ENCODE measurements at regions of chr10 and their contacts with region 1.

Region 1: DNA sequence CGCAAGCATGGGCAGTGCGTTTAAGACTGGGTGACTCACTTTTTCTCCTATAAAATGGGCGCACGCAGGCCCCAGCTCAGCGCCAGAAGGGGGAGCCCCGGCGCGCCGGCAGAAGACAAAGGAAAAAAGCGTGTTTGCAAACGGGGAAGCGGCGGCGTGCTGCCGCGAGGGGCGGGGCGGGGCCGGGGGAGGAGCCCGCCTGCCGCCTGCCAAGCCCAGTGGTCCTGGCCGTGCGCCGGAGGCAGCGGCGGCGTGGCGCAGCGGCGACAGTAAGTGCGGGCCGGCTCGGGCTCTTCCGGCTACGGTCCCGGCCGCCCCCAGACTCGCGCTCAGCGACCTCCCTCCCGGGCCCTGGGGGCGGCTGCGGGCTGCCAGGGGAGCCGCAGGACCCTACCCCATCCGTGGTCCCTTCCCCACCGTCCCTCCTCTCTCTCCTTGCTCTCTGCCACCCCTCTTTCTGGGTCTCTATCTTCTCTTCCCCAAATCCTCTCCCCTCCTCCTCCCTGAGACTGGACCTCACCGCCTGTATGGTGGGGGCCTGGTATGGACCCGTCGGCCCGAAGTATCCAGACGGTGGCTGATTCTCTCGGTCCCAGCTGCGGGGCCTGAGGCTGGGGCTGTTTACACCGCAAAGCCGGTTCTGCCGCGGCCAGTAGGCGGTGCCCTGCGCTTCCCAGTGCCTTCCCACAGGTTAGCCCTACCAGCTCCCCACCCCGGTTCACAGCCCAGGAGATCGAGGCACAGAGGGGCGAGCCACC is at the start of gene SLC29A3:
- DNase-seq: peak; percentile 93
- H3K4me3 Mint-ChIP-seq: peak within 1 kb of the TSS; percentile 90
- H3K27ac Mint-ChIP-seq: peak within 1 kb of the TSS; percentile 46
- H3K4me1 Mint-ChIP-seq: peaks cover 23% of the 10 kb centered on the region
- H3K27me3 Mint-ChIP-seq: no peaks in the 10 kb centered on the region
- total RNA-seq, gene SLC29A3: 2.5 to 3.0 TPM

Region 2: GRCh38 chr10:71367271-71367670 is 48.0 kb after region 1 on chr10:
- CTCF ChIA-PET with region 1: no interaction called
- POLR2A ChIA-PET with region 1: no interaction called
- intact Hi-C with region 1: loop called (anchors 1 kb)
- DNase-seq: no peak
- H3K4me3 Mint-ChIP-seq: no peak overlapping the region
- H3K27ac Mint-ChIP-seq: no peak overlapping the region
- H3K4me1 Mint-ChIP-seq: peaks cover 3% of the 10 kb centered on the region
- H3K27me3 Mint-ChIP-seq: peaks cover 3% of the 10 kb centered on the region

Region 3: GRCh38 chr10:71372882-71373495 is 53.8 kb after region 1 on chr10:
- CTCF ChIA-PET with region 1: interaction called, 21 read pairs
- POLR2A ChIA-PET with region 1: interaction called, 5 read pairs
- intact Hi-C with region 1: loop called (anchors 1 kb)
- DNase-seq: no peak
- H3K4me3 Mint-ChIP-seq: no peak overlapping the region
- H3K27ac Mint-ChIP-seq: no peak overlapping the region
- H3K4me1 Mint-ChIP-seq: peaks cover 7% of the 10 kb centered on the region
- H3K27me3 Mint-ChIP-seq: peaks cover 3% of the 10 kb centered on the region

Region 4: GRCh38 chr10:71378336-71379117 is 59.3 kb after region 1 on chr10:
- CTCF ChIA-PET with region 1: interaction called, 21 read pairs
- POLR2A ChIA-PET with region 1: interaction called, 5 read pairs
- intact Hi-C with region 1: loop called (anchors 1 kb)
- DNase-seq: no peak
- H3K4me3 Mint-ChIP-seq: no peak overlapping the region
- H3K27ac Mint-ChIP-seq: no peak overlapping the region
- H3K4me1 Mint-ChIP-seq: peaks cover 7% of the 10 kb centered on the region
- H3K27me3 Mint-ChIP-seq: no peaks in the 10 kb centered on the region

Region 5: GRCh38 chr10:71608819-71609768 is 289.9 kb after region 1 on chr10:
- CTCF ChIA-PET with region 1: interaction called, 11 read pairs
- POLR2A ChIA-PET with region 1: no interaction called
- intact Hi-C with region 1: loop called (anchors 10 kb)
- DNase-seq: peak; percentile 78
- H3K4me3 Mint-ChIP-seq: no peak overlapping the region
- H3K27ac Mint-ChIP-seq: no peak overlapping the region
- H3K4me1 Mint-ChIP-seq: no peaks in the 10 kb centered on the region
- H3K27me3 Mint-ChIP-seq: peaks cover 1% of the 10 kb centered on the region

Region 6: GRCh38 chr10:71766702-71767419 is 447.6 kb after region 1 on chr10:
- CTCF ChIA-PET with region 1: interaction called, 3 read pairs
- POLR2A ChIA-PET with region 1: no interaction called
- intact Hi-C with region 1: loop called (anchors 5 kb)
- DNase-seq: peak; percentile 65
- H3K4me3 Mint-ChIP-seq: peak overlapping the region; percentile 38
- H3K27ac Mint-ChIP-seq: peak overlapping the region; percentile 96
- H3K4me1 Mint-ChIP-seq: peaks cover 93% of the 10 kb centered on the region
- H3K27me3 Mint-ChIP-seq: no peaks in the 10 kb centered on the region

Measured in activated CD4-positive, alpha-beta memory T cell treated with anti-CD3 and anti-CD28 coated beads for 36 hours (primary cell).